ENCODE measurements at regions of chrX and their contacts with region 1.

Region 1: DNA sequence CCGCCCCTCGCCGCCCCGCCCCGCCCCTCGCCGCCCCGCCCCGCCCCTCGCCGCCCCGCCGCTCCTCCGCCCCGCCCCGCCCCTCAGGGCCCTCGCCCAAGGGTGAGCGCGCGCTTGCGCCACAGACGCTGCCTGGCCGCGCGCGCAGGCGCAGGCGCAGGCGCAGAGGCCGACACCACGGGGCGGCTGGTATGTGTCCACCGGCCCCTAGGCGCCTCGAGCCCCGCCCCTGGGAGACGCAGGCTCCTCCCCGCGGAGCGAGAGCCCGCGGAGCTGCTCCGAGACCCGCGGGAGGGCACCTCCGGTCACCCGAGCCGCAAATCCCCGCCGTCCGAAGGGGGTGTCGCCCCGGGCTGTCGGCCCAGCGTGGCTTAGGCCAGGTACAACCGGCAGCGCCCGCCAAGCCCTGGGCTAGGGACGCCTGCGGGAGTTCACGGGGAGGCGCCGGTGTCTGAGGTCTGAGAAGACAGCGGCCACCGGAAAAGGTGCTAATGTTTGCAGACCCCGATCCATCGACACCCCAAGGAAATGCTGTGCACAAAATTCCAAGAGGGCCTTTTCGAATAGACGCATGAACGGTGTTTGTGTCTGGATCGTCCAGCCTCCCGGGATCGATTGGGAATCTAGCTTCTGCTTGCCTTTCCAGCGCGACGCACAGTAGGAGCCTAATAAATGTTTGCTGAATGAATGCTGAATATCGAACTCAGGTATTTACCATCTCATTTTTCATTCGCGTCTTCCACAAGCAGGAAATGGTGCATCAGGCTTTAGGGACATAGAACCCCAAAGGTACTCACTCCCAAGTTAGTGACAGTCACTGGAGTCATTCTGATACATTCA is 473 bp upstream of the CCNQ start:
- DNase-seq: peak; percentile 91
- ATAC-seq: peak; percentile 92
- H3K4me3 Mint-ChIP-seq: peak overlapping the region; percentile 75
- H3K27ac Mint-ChIP-seq: peak overlapping the region; percentile 64
- H3K4me1 Mint-ChIP-seq: peaks cover 31% of the 10 kb centered on the region
- H3K27me3 Mint-ChIP-seq: no peaks in the 10 kb centered on the region

Region 2: DNA sequence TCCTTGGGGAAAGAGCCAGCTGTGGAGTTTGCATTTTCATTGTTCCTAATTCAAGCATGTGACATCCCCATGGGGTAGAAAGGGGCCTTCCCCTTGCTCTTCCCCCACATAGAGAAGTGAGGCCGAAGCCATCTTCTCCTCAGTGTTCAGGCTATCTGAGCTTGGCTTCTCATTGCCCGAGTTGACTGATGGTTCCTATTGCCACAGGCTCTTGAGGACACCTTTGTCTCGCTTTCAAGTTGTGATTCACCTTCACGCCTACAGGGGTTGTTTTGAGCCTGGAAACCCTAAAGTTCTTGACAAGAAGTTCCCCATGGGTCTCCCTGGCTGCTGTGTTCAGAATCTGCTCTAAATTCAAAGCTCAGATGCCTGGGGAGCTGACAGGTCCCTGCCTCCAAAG is 25.4 kb before region 1 on chrX:
- CTCF ChIA-PET with region 1: no interaction called
- DNase-seq: no peak
- ATAC-seq: no peak
- H3K4me3 Mint-ChIP-seq: no peak overlapping the region
- H3K27ac Mint-ChIP-seq: no peak overlapping the region
- H3K4me1 Mint-ChIP-seq: no peaks in the 10 kb centered on the region
- H3K27me3 Mint-ChIP-seq: no peaks in the 10 kb centered on the region

Region 3: DNA sequence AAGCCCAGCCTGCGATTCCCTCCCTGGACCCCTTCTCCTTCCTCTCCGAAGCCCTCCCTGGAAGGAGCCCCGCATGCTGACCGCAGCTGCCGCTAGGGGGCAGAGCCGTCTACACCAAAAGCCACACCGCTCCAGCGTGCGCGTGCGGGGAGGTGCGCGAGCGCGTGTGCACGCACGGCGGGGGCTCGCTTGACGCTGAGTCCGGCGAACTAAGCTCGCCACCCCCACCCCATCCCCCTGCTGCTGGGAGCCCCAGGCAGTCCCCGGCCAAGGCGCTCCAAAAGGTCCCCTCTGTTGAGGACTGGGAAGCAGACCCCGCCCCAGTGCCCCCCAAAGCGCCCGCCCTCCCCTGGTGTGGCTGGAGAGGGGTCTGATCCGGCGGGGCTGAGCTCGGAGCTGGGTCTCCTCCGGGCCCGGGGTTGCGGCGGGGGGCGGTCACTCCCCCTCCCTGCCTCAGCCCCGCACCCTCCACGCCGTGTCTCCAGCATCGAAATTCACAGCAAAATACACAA is 10.6 kb after region 1 on chrX:
- CTCF ChIA-PET with region 1: interaction called, 20 read pairs
- DNase-seq: peak; percentile 73
- ATAC-seq: peak; percentile 93
- H3K4me3 Mint-ChIP-seq: peak overlapping the region; percentile 60
- H3K27ac Mint-ChIP-seq: no peak overlapping the region
- H3K4me1 Mint-ChIP-seq: peaks cover 2% of the 10 kb centered on the region
- H3K27me3 Mint-ChIP-seq: peaks cover 15% of the 10 kb centered on the region

Measured in activated CD8-positive, alpha-beta memory T cell treated with anti-CD3 and anti-CD28 coated beads, Interleukin-2, amount 10 ng/mL, durations not matched to agents 7 days and 5 days (primary cell).